ENCODE measurements at regions of chr6 and their contacts with region 1.

Region 1: DNA sequence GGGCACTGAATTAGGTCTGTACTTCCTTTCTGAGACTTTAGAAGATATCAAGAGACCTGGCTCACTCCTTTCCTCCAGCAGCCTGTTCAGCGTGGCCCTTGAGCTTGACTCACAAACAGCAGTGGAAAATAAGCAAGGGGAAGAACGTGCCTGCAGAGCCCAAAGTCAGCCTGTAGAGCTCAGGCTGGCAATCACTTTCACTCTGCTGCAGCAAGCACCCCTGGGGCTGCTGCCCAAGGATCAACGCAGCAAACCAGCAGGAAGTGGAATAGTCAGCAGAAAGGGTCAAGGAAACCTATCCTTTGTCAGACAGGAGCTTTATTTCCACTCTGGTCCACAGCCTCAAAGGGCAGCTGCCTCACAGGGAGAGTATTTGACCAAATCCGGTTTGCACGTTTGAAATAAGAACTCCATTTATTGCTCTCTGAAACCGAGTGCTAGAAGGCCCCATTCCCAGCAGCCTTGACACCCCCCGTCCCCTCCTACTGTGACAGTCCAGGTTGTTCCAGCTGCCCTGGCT is 77.4 kb downstream of the PRDM1 start:
- DNase-seq: peak; percentile 77
- H3K4me3 Mint-ChIP-seq: peak overlapping the region; percentile 64
- H3K27ac Mint-ChIP-seq: peak overlapping the region; percentile 97
- H3K4me1 Mint-ChIP-seq: peaks cover 83% of the 10 kb centered on the region
- H3K27me3 Mint-ChIP-seq: no peaks in the 10 kb centered on the region

Region 2: GRCh38 chr6:106085984-106086813 is 77.3 kb before region 1 on chr6 and contains the start of gene PRDM1:
- CTCF ChIA-PET with region 1: interaction called, 5 read pairs
- POLR2A ChIA-PET with region 1: interaction called, 18 read pairs
- DNase-seq: peak; percentile 90
- H3K4me3 Mint-ChIP-seq: peak within 1 kb of the TSS; percentile 97
- H3K27ac Mint-ChIP-seq: peak within 1 kb of the TSS; percentile 71
- H3K4me1 Mint-ChIP-seq: peaks cover 68% of the 10 kb centered on the region
- H3K27me3 Mint-ChIP-seq: no peaks in the 10 kb centered on the region
- total RNA-seq, gene PRDM1: 112 to 115 TPM

Region 3: GRCh38 chr6:106114492-106115265 is 48.8 kb before region 1 on chr6:
- CTCF ChIA-PET with region 1: interaction called, 11 read pairs
- POLR2A ChIA-PET with region 1: interaction called, 45 read pairs
- DNase-seq: peak; percentile 77
- H3K4me3 Mint-ChIP-seq: peak overlapping the region; percentile 36
- H3K27ac Mint-ChIP-seq: peak overlapping the region; percentile 85
- H3K4me1 Mint-ChIP-seq: peaks cover 95% of the 10 kb centered on the region
- H3K27me3 Mint-ChIP-seq: peaks cover 5% of the 10 kb centered on the region

Region 4: GRCh38 chr6:106141441-106142237 is 21.9 kb before region 1 on chr6:
- CTCF ChIA-PET with region 1: interaction called, 7 read pairs
- POLR2A ChIA-PET with region 1: interaction called, 79 read pairs
- DNase-seq: peak; percentile 67
- H3K4me3 Mint-ChIP-seq: peak overlapping the region; percentile 33
- H3K27ac Mint-ChIP-seq: peak overlapping the region; percentile 96
- H3K4me1 Mint-ChIP-seq: peaks cover 63% of the 10 kb centered on the region
- H3K27me3 Mint-ChIP-seq: no peaks in the 10 kb centered on the region

Region 5: DNA sequence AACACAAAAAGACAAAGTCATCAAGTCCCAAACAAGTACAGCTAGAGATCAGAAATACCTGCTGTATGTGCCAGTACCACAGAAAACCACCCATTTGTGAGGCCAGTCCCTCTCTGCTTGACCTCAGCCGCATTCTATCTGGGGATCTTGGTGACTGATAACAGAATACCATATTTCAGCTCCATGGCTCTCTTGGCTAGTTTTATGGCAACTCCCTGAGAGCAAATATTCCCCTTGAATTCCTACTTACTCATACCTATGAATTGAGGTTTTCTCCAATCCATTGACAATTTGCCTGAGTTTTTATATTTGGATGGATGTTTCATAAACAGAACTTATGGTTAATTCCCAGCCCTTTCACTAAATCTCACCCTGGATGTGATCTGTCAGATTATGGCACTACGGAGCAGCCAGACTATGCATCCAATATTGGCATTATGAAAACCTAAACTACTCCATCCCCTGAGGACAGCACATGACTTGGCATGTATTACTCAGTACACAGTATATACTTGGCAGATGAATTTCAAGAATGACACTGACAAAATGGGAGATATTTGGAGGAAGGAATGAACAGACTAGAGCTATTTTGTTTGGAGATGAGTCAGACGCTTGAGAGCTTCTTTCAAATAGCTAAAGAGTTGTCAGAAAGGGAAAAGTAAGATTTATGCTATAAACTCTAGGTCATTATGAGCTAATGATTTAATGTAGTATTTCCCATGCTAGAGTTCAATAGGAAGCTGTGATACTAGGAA is 18.3 kb after region 1 on chr6:
- CTCF ChIA-PET with region 1: interaction called, 11 read pairs
- POLR2A ChIA-PET with region 1: interaction called, 55 read pairs
- DNase-seq: no peak
- H3K4me3 Mint-ChIP-seq: no peak overlapping the region
- H3K27ac Mint-ChIP-seq: peak overlapping the region; percentile 41
- H3K4me1 Mint-ChIP-seq: peaks cover 58% of the 10 kb centered on the region
- H3K27me3 Mint-ChIP-seq: peaks cover under 1% of the 10 kb centered on the region

Region 6: GRCh38 chr6:106223300-106223930 is 59.9 kb after region 1 on chr6:
- CTCF ChIA-PET with region 1: interaction called, 18 read pairs
- POLR2A ChIA-PET with region 1: interaction called, 8 read pairs
- DNase-seq: peak; percentile 79
- H3K4me3 Mint-ChIP-seq: no peak overlapping the region
- H3K27ac Mint-ChIP-seq: no peak overlapping the region
- H3K4me1 Mint-ChIP-seq: peaks cover 43% of the 10 kb centered on the region
- H3K27me3 Mint-ChIP-seq: no peaks in the 10 kb centered on the region